ENCODE measurements at regions of chr19 and their contacts with region 1.

Region 1: GRCh38 chr19:17496337-17496997 is 15.0 kb upstream of the PGLS start:
- DNase-seq: no peak
- ATAC-seq: peak; percentile 65

Region 2: GRCh38 chr19:18091217-18091608 is 594.7 kb after region 1 on chr19:
- intact Hi-C with region 1: loop called (anchors 5 kb)
- DNase-seq: peak; percentile 76
- ATAC-seq: peak; percentile 45

Measured in sciatic nerve (tissue), 2 donors.